ENCODE measurements at regions of chr1 and their contacts with region 1.

Region 1: DNA sequence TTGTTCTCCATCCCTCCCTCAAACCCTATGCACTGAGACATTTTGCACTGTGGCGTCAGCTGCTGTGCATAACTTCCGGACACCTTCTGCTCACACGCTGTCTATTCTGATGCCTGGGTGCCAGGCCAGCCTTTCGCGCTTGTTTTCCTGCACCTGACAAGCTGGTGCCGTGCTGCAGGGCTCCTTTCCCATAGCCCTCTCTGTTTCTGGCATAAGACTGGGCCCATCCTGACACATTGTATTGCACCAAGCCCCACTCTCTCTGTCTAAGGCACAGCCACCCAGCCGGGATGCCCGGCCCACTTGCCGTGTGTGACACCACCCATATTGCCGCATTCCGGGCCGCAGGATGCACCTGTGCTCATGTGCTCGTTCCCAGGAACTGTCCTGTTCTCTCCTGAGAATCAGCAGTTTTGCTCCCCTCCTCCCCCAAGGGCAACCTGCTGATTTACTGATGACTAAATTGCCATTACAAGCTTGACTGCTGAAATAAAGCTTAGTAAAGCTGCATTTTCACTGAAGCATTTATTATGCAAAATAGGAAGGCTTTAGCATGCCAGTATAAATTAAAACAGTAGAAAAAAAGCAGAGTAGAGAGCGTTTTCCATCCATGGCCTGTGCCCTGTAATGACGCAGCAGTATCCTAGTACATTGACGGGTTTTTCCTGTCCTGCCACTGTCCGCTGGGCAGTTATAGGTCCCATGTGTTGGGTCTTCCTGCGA is 88.0 kb downstream of the CD247 start:
- DNase-seq: peak; percentile 52 to 58
- ATAC-seq: peak; percentile 20 to 50 (median 21)
- H3K4me3 ChIP-seq: no peak overlapping the region
- H3K4me3 Mint-ChIP-seq: peak overlapping the region; percentile 85
- H3K27ac ChIP-seq: peak overlapping the region; percentile 98
- H3K27ac Mint-ChIP-seq: peak overlapping the region; percentile 91 to 100
- H3K4me1 ChIP-seq: peaks cover 82% of the 10 kb centered on the region
- H3K4me1 Mint-ChIP-seq: peaks cover 87 to 89% of the 10 kb centered on the region in 2 donors
- H3K27me3 ChIP-seq: no peaks in the 10 kb centered on the region
- H3K27me3 Mint-ChIP-seq: no peaks in the 10 kb centered on the region
- CTCF ChIP-seq: no peak

Region 2: DNA sequence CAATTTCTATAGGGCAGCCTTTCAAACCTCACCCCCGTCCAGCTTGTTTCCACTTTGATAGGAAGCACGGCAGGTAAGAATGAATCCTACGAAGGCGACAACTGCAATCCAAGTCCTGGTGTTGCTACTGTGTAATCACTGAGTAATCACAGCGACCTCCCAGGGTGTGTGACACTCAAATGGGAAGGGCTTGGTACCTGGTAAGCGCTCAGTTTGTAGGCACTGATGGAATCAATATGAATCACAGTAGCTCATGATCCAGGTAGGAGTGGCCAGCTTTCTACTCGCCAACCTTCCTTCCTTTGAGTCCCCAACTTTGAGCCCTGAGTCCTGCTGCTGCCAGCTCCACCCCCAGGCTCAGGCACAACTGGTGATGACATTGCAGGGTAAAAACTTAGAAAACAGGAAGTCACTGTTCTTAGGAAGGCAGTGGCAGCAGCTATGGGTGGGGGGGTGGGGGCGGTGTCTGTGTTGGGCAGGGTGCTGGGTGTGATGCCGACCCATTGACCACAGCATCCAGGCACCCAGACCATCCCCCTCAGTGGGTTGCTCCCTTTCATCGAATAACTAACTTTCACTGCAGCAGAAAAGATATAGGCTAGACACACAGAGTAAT is 17.3 kb after region 1 on chr1:
- intact Hi-C with region 1: loop called (anchors 1 kb)
- DNase-seq: peak in 1 of 2 donors; percentile 86
- ATAC-seq: peak; percentile 39 to 74 (median 54)
- H3K4me3 ChIP-seq: peak overlapping the region; percentile 9
- H3K4me3 Mint-ChIP-seq: peak overlapping the region; percentile 88
- H3K27ac ChIP-seq: peak overlapping the region; percentile 93
- H3K27ac Mint-ChIP-seq: peak overlapping the region; percentile 91 to 100
- H3K4me1 ChIP-seq: peaks cover 96% of the 10 kb centered on the region
- H3K4me1 Mint-ChIP-seq: peaks cover 88% of the 10 kb centered on the region in 2 donors
- H3K27me3 ChIP-seq: no peaks in the 10 kb centered on the region
- H3K27me3 Mint-ChIP-seq: no peaks in the 10 kb centered on the region
- CTCF ChIP-seq: no peak

Measured in natural killer cell (primary cell).